Colonic mucosa (tissue), 4 donors: ENCODE measurements at regions of chr11 and their contacts with region 1.

Region 1: DNA sequence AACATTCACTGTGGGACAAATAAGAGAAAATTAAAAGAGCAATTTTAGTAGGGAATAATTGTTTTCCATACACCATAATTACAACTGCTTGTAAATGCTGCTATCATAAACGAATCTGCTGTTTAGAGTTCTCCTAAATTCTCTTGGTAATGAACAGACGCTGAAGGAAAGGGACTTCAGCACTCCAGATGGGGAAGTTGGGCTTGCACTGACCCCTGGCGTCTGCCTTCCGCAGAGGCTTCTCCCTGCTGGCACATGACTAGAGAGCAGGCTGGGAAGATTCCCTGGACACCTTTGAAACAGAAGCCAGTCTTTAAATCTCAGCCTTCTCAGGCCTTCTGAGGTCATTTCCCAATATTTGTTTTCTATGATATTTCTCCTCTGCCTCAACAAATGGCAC is 84.1 kb downstream of the NXPE2 start:
- DNase-seq: peak; percentile 85
- H3K4me3 ChIP-seq: no peak overlapping the region
- H3K27ac ChIP-seq: no peak overlapping the region
- H3K4me1 ChIP-seq: no peaks in the 10 kb centered on the region
- H3K27me3 ChIP-seq: no peaks in the 10 kb centered on the region
- CTCF ChIP-seq: peak; percentile 71

Region 2: DNA sequence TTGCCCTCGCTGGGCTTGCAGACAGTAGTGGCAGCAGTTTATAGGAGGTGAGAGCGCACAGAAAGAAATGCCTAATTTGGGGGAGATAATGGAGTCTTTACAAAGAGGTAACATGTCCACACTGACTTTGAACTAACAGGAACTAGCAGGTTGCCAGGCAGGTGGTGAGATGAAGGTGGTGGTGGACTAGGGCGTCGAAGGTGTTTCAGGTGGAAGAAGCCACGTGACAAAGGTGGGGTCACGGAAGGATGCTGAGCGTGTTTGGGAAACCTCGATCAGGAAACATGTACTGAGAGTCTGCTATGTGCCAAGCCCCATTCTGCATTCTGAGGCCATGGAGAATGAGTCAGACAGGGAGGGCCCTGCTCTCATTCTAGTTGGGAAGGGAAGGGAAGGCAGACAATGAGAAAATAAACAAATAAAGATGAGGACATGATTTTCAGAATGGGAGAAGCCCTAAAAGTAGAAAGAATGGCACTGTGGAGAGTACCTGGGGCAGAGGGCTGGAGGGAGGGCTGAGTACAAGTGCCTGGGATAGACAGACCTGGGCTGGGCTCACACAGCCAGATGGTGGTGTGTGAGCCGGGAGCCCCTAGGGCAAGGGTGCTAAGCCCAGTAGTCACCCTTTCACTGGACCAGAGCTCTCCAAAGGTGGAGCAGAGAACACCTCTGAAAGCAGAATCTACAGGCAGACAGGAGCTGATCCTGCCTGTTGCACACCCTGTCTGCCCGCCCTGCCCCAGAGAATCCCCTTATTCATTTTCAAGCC is 482.4 kb before region 1 on chr11:
- intact Hi-C with region 1: loop called (anchors 5 kb)
- DNase-seq: no peak
- H3K4me3 ChIP-seq: no peak overlapping the region
- H3K27ac ChIP-seq: no peak overlapping the region
- H3K4me1 ChIP-seq: no peaks in the 10 kb centered on the region
- H3K27me3 ChIP-seq: no peaks in the 10 kb centered on the region
- CTCF ChIP-seq: no peak

Region 3: GRCh38 chr11:114340311-114341131 is 421.9 kb before region 1 on chr11:
- intact Hi-C with region 1: loop called (anchors 5 kb)
- DNase-seq: peak; percentile 38
- H3K4me3 ChIP-seq: no peak overlapping the region
- H3K27ac ChIP-seq: no peak overlapping the region
- H3K4me1 ChIP-seq: no peaks in the 10 kb centered on the region
- H3K27me3 ChIP-seq: no peaks in the 10 kb centered on the region
- CTCF ChIP-seq: peak; percentile 73